ENCODE measurements at regions of chr2 and their contacts with region 1.

Region 1: GRCh38 chr2:741195-741496 is 63.9 kb upstream of the TMEM18 start:
- H3K4me3 ChIP-seq: peak overlapping the region; percentile 52
- H3K27ac ChIP-seq: peak overlapping the region; percentile 18; the same call in 1 of the 2 replicates
- H3K4me1 ChIP-seq: 0 out of 2 replicates have a peak, but pooled peaks cover 3% of the 10 kb centered on the region
- CTCF ChIP-seq: no peak

Region 2: GRCh38 chr2:317501-318424 is 423.4 kb before region 1 on chr2:
- CTCF ChIA-PET with region 1: no interaction called
- POLR2A ChIA-PET with region 1: no interaction called
- H3K4me3 ChIP-seq: no peak overlapping the region
- H3K27ac ChIP-seq: no peak overlapping the region
- H3K4me1 ChIP-seq: no peaks in the 10 kb centered on the region
- CTCF ChIP-seq: no peak

Region 3: DNA sequence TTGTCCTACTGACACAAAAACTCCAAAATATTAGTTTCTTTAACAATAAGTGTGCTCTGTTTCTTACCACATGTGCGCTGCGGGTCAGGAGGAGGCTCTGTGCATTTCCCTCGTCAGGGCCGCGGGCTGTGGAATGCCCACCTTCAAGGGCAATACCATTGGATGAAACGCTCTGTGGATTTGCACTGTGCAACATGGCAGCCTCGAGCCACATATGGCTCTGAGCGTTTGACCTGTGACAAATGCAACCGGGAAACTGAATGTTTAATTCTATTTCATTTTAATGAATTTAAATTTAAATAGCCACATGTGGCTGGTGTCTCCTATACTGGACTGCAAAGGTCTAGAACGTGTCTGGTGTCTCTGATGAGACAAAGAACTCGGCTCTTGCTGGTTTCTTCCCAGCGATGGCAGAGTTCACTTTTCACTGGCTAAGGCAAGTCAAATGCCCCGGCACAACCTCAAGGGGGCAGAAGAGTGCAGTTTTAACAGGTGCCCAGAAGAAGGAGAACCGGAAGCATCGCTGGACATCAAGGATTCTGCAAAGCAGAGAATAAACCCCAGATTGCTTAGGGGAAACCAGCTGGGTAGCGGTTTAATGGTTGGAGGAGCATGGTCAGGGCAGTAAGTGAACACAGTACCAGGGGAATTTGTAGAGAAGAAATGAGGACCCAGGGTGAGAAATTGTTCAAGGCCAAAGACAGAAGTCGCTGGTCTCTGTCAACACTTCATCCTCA is 27.0 kb before region 1 on chr2:
- CTCF ChIA-PET with region 1: interaction called, 13 read pairs
- POLR2A ChIA-PET with region 1: no interaction called
- H3K4me3 ChIP-seq: no peak overlapping the region
- H3K27ac ChIP-seq: no peak overlapping the region
- H3K4me1 ChIP-seq: no peaks in the 10 kb centered on the region
- CTCF ChIP-seq: no peak; the same call in 1 of the 2 replicates

Measured in HEK293 (cell line).